Endothelial cell of umbilical vein (primary cell): ENCODE measurements at regions of chr4 and their contacts with region 1.

Region 1: GRCh38 chr4:54961357-54961975 is 163.9 kb downstream of the KDR start:
- DNase-seq: peak; percentile 69
- H3K4me3 ChIP-seq: no peak overlapping the region
- H3K27ac ChIP-seq: no peak overlapping the region
- H3K4me1 ChIP-seq: no peaks in the 10 kb centered on the region
- H3K27me3 ChIP-seq: peaks cover 5 to 14% of the 10 kb centered on the region in 2 experiments
- CTCF ChIP-seq: peak; percentile 46 to 50
- POLR2A ChIP-seq: no peak

Region 2: DNA sequence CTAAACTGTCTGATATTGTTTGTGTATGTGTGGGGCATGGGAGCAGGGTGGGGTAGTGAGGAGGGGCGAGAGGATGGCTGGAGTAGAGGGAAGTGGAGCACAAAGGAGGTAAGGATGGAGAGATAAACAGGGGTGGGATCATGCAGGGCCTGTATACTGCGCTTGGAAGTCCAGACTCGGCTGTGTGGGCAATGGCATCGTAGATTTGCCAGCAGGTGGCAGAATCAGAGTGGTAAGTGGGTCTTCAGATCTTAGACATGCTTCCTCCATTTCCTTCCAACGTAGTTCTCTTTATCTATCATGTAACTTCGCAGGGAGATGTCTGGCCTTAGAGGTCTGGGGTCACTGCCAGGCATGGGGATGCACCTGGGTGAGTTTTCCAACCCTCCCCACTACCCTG is 576.9 kb before region 1 on chr4:
- CTCF ChIA-PET with region 1: interaction called, 15 read pairs
- POLR2A ChIA-PET with region 1: no interaction called
- dilution Hi-C with region 1: no loop called
- intact Hi-C with region 1: loop called (anchors 1 kb)
- DNase-seq: peak; percentile 47
- H3K4me3 ChIP-seq: no peak overlapping the region
- H3K27ac ChIP-seq: no peak overlapping the region
- H3K4me1 ChIP-seq: no peaks in the 10 kb centered on the region
- H3K27me3 ChIP-seq: no peaks in the 10 kb centered on the region
- CTCF ChIP-seq: peak; percentile 24 to 53
- POLR2A ChIP-seq: no peak

Region 3: DNA sequence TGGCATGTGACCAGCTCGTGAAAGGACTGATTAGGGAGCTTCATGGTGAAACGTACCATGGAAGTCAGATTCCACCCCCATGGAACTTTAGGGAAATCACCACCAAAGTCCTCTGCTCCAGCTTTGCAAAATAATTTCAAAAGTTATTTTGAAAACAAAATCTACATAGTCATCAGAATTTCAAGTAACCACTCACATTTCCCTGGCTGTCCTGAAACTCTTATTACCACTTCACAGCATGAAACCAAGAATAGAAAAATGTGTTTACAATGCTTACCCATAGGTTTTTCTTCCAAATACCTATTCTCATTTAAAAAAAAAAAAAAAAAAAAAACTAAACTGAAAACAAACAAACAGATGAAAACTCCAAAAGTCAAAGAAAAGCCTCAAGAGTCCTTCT is 533.6 kb before region 1 on chr4:
- CTCF ChIA-PET with region 1: no interaction called
- POLR2A ChIA-PET with region 1: no interaction called
- dilution Hi-C with region 1: no loop called
- intact Hi-C with region 1: no loop called
- DNase-seq: no peak
- H3K4me3 ChIP-seq: no peak overlapping the region
- H3K27ac ChIP-seq: no peak overlapping the region
- H3K4me1 ChIP-seq: no peaks in the 10 kb centered on the region
- H3K27me3 ChIP-seq: peaks cover 2 to 3% of the 10 kb centered on the region in 2 experiments
- CTCF ChIP-seq: no peak
- POLR2A ChIP-seq: no peak

Region 4: GRCh38 chr4:54658252-54659093 is 303.0 kb before region 1 on chr4:
- CTCF ChIA-PET with region 1: interaction called, 7 read pairs
- POLR2A ChIA-PET with region 1: no interaction called
- dilution Hi-C with region 1: no loop called
- intact Hi-C with region 1: loop called (anchors 1 kb)
- DNase-seq: peak; percentile 62
- H3K4me3 ChIP-seq: peak overlapping the region; percentile 46 to 69 (median 54)
- H3K27ac ChIP-seq: no peak overlapping the region
- H3K4me1 ChIP-seq: peaks cover 16% of the 10 kb centered on the region
- H3K27me3 ChIP-seq: peaks cover 27 to 70% of the 10 kb centered on the region in 2 experiments
- CTCF ChIP-seq: peak in 1 of 2 donors; percentile 47
- POLR2A ChIP-seq: no peak

Region 5: GRCh38 chr4:54683616-54684346 is 277.7 kb before region 1 on chr4:
- CTCF ChIA-PET with region 1: interaction called, 13 read pairs
- POLR2A ChIA-PET with region 1: no interaction called
- dilution Hi-C with region 1: no loop called
- intact Hi-C with region 1: loop called (anchors 1 kb)
- DNase-seq: peak; percentile 39
- H3K4me3 ChIP-seq: no peak overlapping the region
- H3K27ac ChIP-seq: no peak overlapping the region
- H3K4me1 ChIP-seq: no peaks in the 10 kb centered on the region
- H3K27me3 ChIP-seq: peaks cover 0 to 1% of the 10 kb centered on the region in 2 experiments
- CTCF ChIP-seq: peak; percentile 20 to 36
- POLR2A ChIP-seq: no peak

Region 6: GRCh38 chr4:54941994-54942552 is 19.4 kb before region 1 on chr4:
- CTCF ChIA-PET with region 1: interaction called, 16 read pairs
- POLR2A ChIA-PET with region 1: no interaction called
- dilution Hi-C with region 1: no loop called
- intact Hi-C with region 1: no loop called
- DNase-seq: peak; percentile 99
- H3K4me3 ChIP-seq: peak overlapping the region in 1 of 3 experiments; percentile 2
- H3K27ac ChIP-seq: peak overlapping the region; percentile 96
- H3K4me1 ChIP-seq: peaks cover 54% of the 10 kb centered on the region
- H3K27me3 ChIP-seq: no peaks in the 10 kb centered on the region
- CTCF ChIP-seq: no peak
- POLR2A ChIP-seq: peak; percentile 62